ENCODE measurements at regions of chr5 and their contacts with region 1.

Region 1: DNA sequence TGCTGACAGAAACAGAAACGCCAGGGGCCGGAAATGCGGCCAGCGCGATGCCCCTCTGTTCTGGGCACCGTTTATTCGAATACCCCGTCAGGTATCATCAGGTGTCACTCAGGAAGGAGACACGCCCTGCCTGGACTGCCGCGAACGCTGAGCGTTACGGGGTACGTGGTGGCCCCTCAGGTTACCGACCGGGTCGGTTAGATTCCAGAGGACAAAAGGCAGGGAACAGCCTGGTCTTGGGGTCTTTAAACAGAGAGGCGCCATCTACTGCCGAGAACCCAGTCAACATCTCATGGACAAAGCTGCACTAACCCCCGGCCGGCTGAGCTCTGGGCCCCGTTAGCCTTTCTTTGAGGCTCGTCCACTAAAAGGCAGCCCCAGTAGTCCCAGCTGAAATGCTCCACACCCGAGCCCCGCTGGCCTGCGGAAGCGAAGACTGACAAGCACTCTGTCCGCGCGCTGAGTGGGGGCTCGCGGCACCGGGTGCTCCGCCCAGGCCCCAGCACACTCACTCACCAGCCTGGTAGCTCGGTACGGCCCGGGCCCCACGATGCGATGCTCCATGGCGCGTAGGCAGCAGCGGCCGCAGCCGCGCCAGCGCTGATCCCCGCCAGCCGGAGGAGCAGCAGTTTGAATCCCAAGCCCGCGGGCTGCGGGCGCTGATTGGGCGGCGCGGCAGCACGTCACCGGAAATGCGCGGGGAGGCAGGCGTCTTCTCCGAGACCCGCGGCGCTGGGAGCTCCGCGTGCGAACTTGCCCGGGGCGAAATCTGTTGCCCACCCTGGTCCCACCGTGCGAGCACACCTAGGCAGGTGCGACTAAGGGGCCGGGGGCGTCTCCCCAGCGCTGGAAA is at the start of gene DEPDC1B:
- DNase-seq: peak; percentile 92
- H3K4me3 ChIP-seq: peak within 1 kb of the TSS; percentile 53 to 87 (median 70)
- H3K27ac ChIP-seq: peak within 1 kb of the TSS; percentile 54
- H3K4me1 ChIP-seq: peaks cover 15% of the 10 kb centered on the region
- H3K27me3 ChIP-seq: peaks cover 3 to 5% of the 10 kb centered on the region in 2 experiments
- CTCF ChIP-seq: peak; percentile 42 to 60
- POLR2A ChIP-seq: peak; percentile 64
- total RNA-seq, gene DEPDC1B: 14.2 and 18.7 TPM in 2 replicates

Region 2: GRCh38 chr5:60248901-60249300 is 450.9 kb before region 1 on chr5:
- CTCF ChIA-PET with region 1: no interaction called
- POLR2A ChIA-PET with region 1: no interaction called
- dilution Hi-C with region 1: no loop called
- intact Hi-C with region 1: no loop called
- DNase-seq: no peak
- H3K4me3 ChIP-seq: no peak overlapping the region
- H3K27ac ChIP-seq: no peak overlapping the region
- H3K4me1 ChIP-seq: no peaks in the 10 kb centered on the region
- H3K27me3 ChIP-seq: peaks cover 0 to 5% of the 10 kb centered on the region in 2 experiments
- CTCF ChIP-seq: no peak
- POLR2A ChIP-seq: no peak

Region 3: GRCh38 chr5:60687927-60688720 is 11.6 kb before region 1 on chr5:
- CTCF ChIA-PET with region 1: interaction called, 72 read pairs
- POLR2A ChIA-PET with region 1: interaction called, 4 read pairs
- dilution Hi-C with region 1: no loop called
- intact Hi-C with region 1: loop called (anchors 1 kb)
- DNase-seq: peak; percentile 32
- H3K4me3 ChIP-seq: no peak overlapping the region
- H3K27ac ChIP-seq: no peak overlapping the region
- H3K4me1 ChIP-seq: no peaks in the 10 kb centered on the region
- H3K27me3 ChIP-seq: no peaks in the 10 kb centered on the region
- CTCF ChIP-seq: peak; percentile 28 to 57
- POLR2A ChIP-seq: no peak

Region 4: GRCh38 chr5:60727033-60727679 is 27.4 kb after region 1 on chr5:
- CTCF ChIA-PET with region 1: no interaction called
- POLR2A ChIA-PET with region 1: no interaction called
- dilution Hi-C with region 1: no loop called
- intact Hi-C with region 1: no loop called
- DNase-seq: no peak
- H3K4me3 ChIP-seq: no peak overlapping the region
- H3K27ac ChIP-seq: no peak overlapping the region
- H3K4me1 ChIP-seq: no peaks in the 10 kb centered on the region
- H3K27me3 ChIP-seq: peaks cover 0 to 3% of the 10 kb centered on the region in 2 experiments
- CTCF ChIP-seq: no peak
- POLR2A ChIP-seq: no peak

Region 5: DNA sequence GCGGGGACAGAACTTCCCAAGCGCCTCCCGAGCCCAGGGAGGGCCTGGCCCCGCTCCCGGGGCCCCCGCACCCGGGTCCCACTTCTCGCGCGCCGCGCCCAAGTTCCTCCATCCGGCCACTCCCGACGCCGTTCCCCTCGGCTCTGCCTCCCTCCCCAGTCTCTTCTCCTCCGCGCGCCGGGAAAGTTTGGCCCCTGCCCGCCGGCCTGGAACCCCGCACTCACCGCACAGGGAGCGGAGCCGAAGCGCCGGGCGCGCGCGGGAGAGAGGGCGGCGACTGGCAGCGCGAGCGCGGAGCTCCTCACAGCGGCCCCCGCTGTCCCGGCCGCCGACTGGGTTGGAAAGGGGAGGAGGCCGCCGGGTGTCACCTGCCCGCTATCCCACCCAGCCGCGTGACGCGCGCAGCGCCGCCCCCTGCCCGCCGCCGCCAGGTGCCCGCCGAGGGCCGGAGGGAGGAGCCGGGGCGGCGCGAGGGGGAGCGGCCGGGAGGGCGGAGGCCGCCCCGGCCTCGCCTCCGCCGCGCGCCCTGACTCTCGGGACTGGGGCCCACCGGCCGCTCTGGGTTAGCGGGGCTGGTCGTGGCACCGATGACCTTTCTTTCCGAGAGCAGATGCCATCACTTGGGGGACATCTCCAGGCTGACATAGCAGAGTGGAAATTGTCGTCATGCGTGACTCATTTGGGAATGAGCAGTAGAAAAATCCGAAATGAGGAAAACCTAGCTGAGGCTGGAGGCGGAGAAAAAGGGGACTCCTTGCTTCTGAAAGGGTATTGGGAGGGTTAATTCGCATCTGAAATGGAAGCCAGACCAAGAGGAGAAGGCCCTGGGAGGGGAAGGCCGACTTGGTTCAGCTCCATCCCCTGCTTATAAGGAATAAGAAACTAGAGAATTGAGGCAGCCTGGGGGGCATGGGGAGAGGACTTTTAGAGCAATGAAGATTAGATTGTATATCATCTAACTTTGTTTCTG is 144.5 kb after region 1 on chr5 and contains the start of gene ELOVL7:
- CTCF ChIA-PET with region 1: interaction called, 3 read pairs
- POLR2A ChIA-PET with region 1: no interaction called
- dilution Hi-C with region 1: no loop called
- intact Hi-C with region 1: loop called (anchors 10 kb)
- DNase-seq: peak; percentile 14
- H3K4me3 ChIP-seq: peak within 1 kb of the TSS; percentile 36 to 55 (median 39)
- H3K27ac ChIP-seq: no peak within 1 kb of the TSS
- H3K4me1 ChIP-seq: peaks cover 11% of the 10 kb centered on the region
- H3K27me3 ChIP-seq: peaks cover 36 to 72% of the 10 kb centered on the region in 2 experiments
- CTCF ChIP-seq: peak in 1 of 2 donors; percentile 52
- POLR2A ChIP-seq: no peak
- total RNA-seq, gene ELOVL7: 0.09 TPM in 1 of 2 replicates, not detected in the other

Measured in endothelial cell of umbilical vein (primary cell).